Activated CD8-positive, alpha-beta T cell treated with anti-CD3 and anti-CD28 coated beads, Interleukin-2, amount 10 ng/mL, durations not matched to agents 7 days and 5 days (primary cell): ENCODE measurements at regions of chr7 and their contacts with region 1.

Region 1: GRCh38 chr7:105652359-105652993 is 71.2 kb upstream of the EFCAB10 start:
- DNase-seq: peak; percentile 76
- ATAC-seq: peak; percentile 87
- H3K4me3 Mint-ChIP-seq: no peak overlapping the region
- H3K27ac Mint-ChIP-seq: no peak overlapping the region
- H3K4me1 Mint-ChIP-seq: peaks cover 5% of the 10 kb centered on the region
- H3K27me3 Mint-ChIP-seq: no peaks in the 10 kb centered on the region

Region 2: DNA sequence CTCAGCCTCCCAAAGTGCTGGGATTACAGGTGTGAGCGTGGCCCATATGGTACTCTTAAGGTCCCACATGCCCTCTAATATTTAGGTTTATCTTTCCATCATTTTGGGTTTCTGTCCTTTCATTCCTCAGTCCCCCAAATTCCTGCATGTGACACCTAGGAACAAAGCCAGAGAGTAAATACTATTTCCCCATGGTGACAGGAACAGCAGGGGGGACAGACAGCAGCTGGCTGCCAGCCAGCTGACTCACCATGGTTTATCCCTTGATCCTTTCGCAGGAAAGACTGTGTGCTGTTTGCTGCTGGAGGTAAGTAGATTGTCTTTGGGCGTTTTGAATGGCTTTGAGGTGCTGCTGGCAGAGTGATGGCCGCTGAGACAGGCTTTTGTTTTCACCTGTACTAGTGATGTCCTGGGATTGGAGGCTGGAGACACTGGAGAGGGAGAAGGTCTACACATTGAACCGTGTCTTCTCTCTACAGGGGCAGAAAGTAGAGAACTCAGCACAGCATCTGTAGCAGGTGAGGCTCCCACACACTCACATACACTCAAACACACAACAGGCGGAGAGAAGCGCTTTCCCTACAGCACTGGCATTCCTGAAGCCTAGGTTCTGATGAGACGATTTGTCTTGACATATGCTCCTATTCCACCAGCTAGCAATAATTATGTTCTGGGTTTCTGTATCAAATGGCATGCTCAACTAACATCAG is 12.5 kb after region 1 on chr7:
- CTCF ChIA-PET with region 1: interaction called, 43 read pairs
- POLR2A ChIA-PET with region 1: no interaction called
- DNase-seq: no peak
- ATAC-seq: no peak
- H3K4me3 Mint-ChIP-seq: no peak overlapping the region
- H3K27ac Mint-ChIP-seq: no peak overlapping the region
- H3K4me1 Mint-ChIP-seq: no peaks in the 10 kb centered on the region
- H3K27me3 Mint-ChIP-seq: no peaks in the 10 kb centered on the region

Region 3: DNA sequence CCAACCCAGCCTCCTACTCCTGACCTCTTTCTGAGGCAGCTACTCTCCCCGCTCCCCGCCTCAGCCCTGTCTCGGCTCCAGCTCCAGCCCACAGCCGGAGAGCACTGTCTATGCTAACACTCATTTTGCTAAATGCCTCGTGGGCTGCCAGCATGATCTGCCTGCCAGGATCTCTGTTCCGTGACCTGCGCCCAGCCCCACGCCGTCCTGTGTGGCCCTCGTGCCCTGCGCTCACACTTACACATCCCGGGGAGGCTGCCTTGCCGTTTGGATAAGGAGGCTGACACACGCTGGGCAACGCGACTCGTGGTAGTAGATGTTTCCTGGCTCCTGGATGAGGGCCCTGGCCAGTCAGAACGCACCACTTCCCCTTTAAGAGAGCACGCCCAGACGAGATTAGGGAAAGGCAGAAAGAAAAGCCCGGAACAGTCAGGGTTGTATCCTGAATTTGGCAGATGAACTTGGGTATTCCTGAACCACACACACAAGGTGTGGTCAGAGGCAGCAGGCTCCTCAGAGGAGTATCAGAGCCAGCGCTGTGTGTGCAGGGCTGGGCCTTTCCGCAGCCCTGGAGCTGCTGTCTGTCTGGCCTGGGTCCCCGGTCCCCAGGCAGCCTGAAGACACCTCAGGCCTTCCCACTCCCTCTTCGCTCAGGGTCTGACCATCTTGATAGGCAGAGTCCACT is 26.5 kb after region 1 on chr7:
- CTCF ChIA-PET with region 1: interaction called, 30 read pairs
- POLR2A ChIA-PET with region 1: interaction called, 3 read pairs
- DNase-seq: no peak
- ATAC-seq: no peak
- H3K4me3 Mint-ChIP-seq: peak overlapping the region; percentile 70
- H3K27ac Mint-ChIP-seq: peak overlapping the region; percentile 93
- H3K4me1 Mint-ChIP-seq: peaks cover 46% of the 10 kb centered on the region
- H3K27me3 Mint-ChIP-seq: peaks cover 2% of the 10 kb centered on the region

Region 4: DNA sequence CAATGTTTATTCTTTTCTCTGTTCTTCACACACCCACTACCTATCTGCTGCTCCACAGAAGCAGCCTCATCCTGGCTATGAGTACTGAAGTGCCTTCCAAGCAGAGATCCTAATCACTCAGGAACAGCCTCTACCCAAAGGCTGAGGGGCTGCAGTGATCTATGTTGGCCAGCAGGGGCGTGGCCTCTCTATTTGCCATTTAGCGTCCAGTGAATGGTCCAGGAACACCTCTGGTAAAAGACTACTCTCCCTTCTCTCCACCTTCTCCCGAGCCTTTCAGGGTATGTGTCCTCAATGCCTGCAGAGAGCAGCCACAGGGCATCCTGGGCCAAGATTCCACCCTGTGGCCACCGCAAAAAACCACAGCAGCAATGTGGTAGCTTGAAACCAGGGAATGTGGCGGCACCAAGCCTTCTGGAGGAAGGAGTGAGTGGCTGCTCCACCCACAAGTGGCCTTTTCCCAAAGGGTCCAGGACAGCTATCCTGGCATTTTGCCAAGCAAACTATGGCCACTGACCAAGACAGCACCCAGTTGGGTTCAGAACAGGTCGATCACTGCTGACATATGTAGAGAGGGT is 388.8 kb after region 1 on chr7:
- CTCF ChIA-PET with region 1: interaction called, 11 read pairs
- POLR2A ChIA-PET with region 1: no interaction called
- DNase-seq: peak; percentile 45
- ATAC-seq: peak; percentile 29
- H3K4me3 Mint-ChIP-seq: no peak overlapping the region
- H3K27ac Mint-ChIP-seq: no peak overlapping the region
- H3K4me1 Mint-ChIP-seq: peaks cover 12% of the 10 kb centered on the region
- H3K27me3 Mint-ChIP-seq: peaks cover 27% of the 10 kb centered on the region